ENCODE measurements at regions of chr16 and their contacts with region 1.

Region 1: GRCh38 chr16:89489040-89489721 is 1.2 kb downstream of the ANKRD11 start:
- DNase-seq: peak; percentile 88

Region 2: DNA sequence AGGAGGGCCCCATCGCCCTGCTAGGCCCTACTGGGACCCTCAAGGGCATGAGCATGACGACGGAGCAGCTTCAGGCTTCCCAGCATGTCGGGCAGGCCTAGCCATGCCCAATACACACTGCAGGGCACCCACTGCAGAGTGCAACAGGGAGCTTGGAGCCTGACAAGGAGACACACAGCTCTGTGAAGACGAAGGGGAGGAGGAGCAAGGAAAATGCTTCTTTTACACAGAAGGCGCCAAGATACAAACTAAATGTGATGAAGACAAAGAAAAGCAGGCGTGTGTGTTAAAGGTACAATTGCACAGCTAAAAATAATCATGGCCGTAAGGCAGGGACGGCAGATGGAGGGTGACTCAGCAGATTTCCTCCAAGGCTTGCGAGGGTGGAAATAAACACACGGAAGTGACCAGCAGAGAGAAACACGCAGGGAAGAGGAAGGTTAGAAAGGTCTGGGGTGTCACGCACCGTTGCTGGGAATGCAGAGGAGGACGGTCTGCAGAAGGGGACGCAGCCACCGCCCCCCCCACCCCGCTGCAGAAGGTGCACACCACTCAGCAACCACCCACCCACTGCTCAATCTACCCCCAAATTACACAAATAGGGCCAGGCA is 163.2 kb before region 1 on chr16:
- intact Hi-C with region 1: loop called (anchors 5 kb)
- DNase-seq: peak; percentile 89

Region 3: DNA sequence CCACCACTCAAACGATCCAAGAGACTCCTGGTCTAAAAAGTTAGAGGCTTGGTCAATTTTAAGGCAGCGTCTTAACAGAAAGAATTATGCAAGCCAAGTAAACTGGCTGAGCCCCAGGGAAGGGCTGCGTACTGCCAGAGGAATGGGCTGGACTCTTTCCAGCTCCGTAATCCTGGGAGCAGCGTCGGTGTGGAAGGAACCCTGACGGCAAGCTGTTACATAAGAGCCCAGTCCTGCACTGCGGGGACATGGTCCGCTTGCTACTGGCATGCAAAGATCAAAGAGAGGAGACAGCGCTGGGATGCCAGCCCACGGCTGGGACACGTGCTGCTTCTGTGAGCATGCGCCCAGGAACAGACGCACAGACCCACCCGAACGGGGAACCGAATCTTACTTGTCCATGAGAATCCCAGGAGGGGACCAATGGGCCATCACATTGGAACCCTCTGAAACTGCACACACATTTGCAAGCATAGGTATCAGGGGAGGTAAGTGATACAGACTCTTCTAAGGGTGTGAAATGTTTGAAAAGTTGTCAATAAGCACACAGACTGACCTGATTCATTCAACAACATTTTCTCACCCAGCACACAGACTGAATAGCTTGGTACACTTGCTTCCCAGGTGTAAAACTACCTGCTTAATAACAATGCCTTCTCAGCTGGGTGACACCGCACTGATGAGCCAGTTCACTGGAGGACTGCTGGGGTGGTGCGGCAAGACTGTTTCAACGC is 93.9 kb before region 1 on chr16:
- intact Hi-C with region 1: loop called (anchors 5 kb)
- DNase-seq: peak; percentile 89

Region 4: GRCh38 chr16:89422905-89423630 is 66.1 kb before region 1 on chr16:
- intact Hi-C with region 1: no loop called
- DNase-seq: no peak

Region 5: GRCh38 chr16:89449726-89450335 is 39.4 kb before region 1 on chr16:
- intact Hi-C with region 1: loop called (anchors 5 kb)
- DNase-seq: no peak

Measured in cardiac septum (tissue), 1 donor.